ENCODE measurements at regions of chr11 and their contacts with region 1.

Region 1: GRCh38 chr11:64317957-64318693 is at the start of gene PRDX5:
- DNase-seq: peak; percentile 97 to 99
- H3K4me3 ChIP-seq: peak within 1 kb of the TSS; percentile 85 to 93
- H3K27ac ChIP-seq: peak within 1 kb of the TSS; percentile 95 to 97
- H3K4me1 ChIP-seq: peaks cover 0 to 33% (median 22%) of the 10 kb centered on the region in 4 donors
- H3K27me3 ChIP-seq: no peaks in the 10 kb centered on the region
- CTCF ChIP-seq: peak; percentile 21

Region 2: GRCh38 chr11:64355078-64355940 is 37.2 kb after region 1 on chr11:
- intact Hi-C with region 1: loop called (anchors 2 kb)
- DNase-seq: peak; percentile 78 to 91
- H3K4me3 ChIP-seq: peak overlapping the region; percentile 35 to 47
- H3K27ac ChIP-seq: peak overlapping the region; percentile 43 to 60
- H3K4me1 ChIP-seq: peaks cover 0 to 44% (median 33%) of the 10 kb centered on the region in 4 donors
- H3K27me3 ChIP-seq: no peaks in the 10 kb centered on the region
- CTCF ChIP-seq: peak; percentile 63 to 67

Region 3: GRCh38 chr11:65301491-65302329 is 983.6 kb after region 1 on chr11:
- intact Hi-C with region 1: no loop called
- DNase-seq: no peak
- H3K4me3 ChIP-seq: no peak overlapping the region
- H3K27ac ChIP-seq: no peak overlapping the region
- H3K4me1 ChIP-seq: peaks cover 0 to 34% (median 23%) of the 10 kb centered on the region in 4 donors
- H3K27me3 ChIP-seq: no peaks in the 10 kb centered on the region
- CTCF ChIP-seq: no peak

Measured in tibial artery (tissue), 4 donors.